Right ventricle myocardium superior (tissue), 1 donor: ENCODE measurements at regions of chr14 and their contacts with region 1.

Region 1: GRCh38 chr14:23068476-23069412 is 11.4 kb upstream of the CDH24 start:
- DNase-seq: peak; percentile 69
- ATAC-seq: peak; percentile 73

Region 2: DNA sequence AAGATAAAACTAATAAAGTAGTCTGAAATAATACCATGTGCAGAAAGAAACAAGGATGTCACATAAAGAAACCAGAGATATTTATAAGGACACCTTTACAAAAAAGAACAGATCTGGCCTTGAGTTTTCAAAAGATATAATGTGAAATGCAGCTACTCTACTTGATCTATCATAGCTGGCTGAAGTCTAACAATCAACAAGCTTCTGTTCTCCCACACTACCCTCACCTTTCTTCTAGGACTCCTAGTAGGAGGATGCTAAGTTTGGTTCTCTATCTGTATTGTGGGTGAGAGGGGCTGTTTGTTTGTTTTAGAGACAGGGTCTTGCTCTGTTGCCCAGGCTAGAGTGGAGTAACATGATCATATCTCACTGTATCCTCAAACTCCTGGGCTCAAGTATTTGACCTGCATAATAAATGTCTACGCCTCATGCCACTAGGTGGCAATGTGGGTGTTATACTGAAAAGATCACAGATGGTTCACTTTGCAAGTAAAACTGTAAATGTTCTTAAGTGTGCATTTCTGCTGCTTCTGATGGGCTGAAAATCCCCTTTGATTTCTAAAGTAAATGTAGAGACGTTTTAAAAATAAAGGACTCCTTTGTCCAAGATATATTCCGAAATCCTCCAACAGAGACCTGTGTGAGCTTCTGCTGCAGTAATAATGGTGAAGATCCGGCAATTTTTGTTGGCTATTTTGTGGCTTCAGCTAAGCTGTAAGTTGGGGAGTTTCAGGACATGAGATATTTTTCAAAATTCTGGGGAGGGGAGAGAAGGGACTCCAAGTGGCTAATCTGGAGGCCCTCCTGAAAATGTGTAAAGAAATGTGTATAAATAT is 749.0 kb before region 1 on chr14:
- intact Hi-C with region 1: no loop called
- DNase-seq: no peak
- ATAC-seq: peak; percentile 81

Region 3: GRCh38 chr14:23104591-23105347 is 36.0 kb after region 1 on chr14 and contains the start of gene CIROP:
- intact Hi-C with region 1: loop called (anchors 5 kb)
- DNase-seq: no peak
- ATAC-seq: no peak
- total RNA-seq, gene CIROP: not detected